CD4-positive, alpha-beta memory T cell (primary cell): ENCODE measurements at regions of chr9 and their contacts with region 1.

Region 1: GRCh38 chr9:77456829-77457437 is 191.2 kb downstream of the GNA14 start:
- DNase-seq: peak; percentile 65 to 74 (median 72)
- H3K4me3 ChIP-seq: no peak overlapping the region
- H3K4me3 Mint-ChIP-seq: no peak overlapping the region
- H3K27ac ChIP-seq: no peak overlapping the region
- H3K27ac Mint-ChIP-seq: no peak overlapping the region
- H3K4me1 ChIP-seq: no peaks in the 10 kb centered on the region
- H3K4me1 Mint-ChIP-seq: peaks cover 8 to 22% (median 14%) of the 10 kb centered on the region in 4 donors
- H3K27me3 ChIP-seq: no peaks in the 10 kb centered on the region
- H3K27me3 Mint-ChIP-seq: peaks cover 0 to 1% of the 10 kb centered on the region in 2 donors

Region 2: GRCh38 chr9:77433675-77434445 is 23.1 kb before region 1 on chr9:
- CTCF ChIA-PET with region 1: interaction called, 37 read pairs
- POLR2A ChIA-PET with region 1: no interaction called
- intact Hi-C with region 1: loop called (anchors 2 kb)
- DNase-seq: peak; percentile 35 to 42 (median 39)
- H3K4me3 ChIP-seq: no peak overlapping the region
- H3K4me3 Mint-ChIP-seq: peak overlapping the region in 3 of 8 donors; percentile 19 to 70 (median 39)
- H3K27ac ChIP-seq: no peak overlapping the region
- H3K27ac Mint-ChIP-seq: peak overlapping the region in 2 of 7 donors; percentile 30 to 77
- H3K4me1 ChIP-seq: no peaks in the 10 kb centered on the region
- H3K4me1 Mint-ChIP-seq: peaks cover 1 to 5% (median 4%) of the 10 kb centered on the region in 4 donors
- H3K27me3 ChIP-seq: no peaks in the 10 kb centered on the region
- H3K27me3 Mint-ChIP-seq: peaks cover 2 to 3% of the 10 kb centered on the region in 2 donors

Region 3: GRCh38 chr9:77469515-77470231 is 12.7 kb after region 1 on chr9:
- CTCF ChIA-PET with region 1: interaction called, 57 read pairs
- POLR2A ChIA-PET with region 1: interaction called, 3 read pairs
- intact Hi-C with region 1: no loop called
- DNase-seq: no peak
- H3K4me3 ChIP-seq: no peak overlapping the region
- H3K4me3 Mint-ChIP-seq: no peak overlapping the region
- H3K27ac ChIP-seq: no peak overlapping the region
- H3K27ac Mint-ChIP-seq: no peak overlapping the region
- H3K4me1 ChIP-seq: no peaks in the 10 kb centered on the region
- H3K4me1 Mint-ChIP-seq: no peaks in the 10 kb centered on the region
- H3K27me3 ChIP-seq: no peaks in the 10 kb centered on the region
- H3K27me3 Mint-ChIP-seq: peaks cover 6 to 10% of the 10 kb centered on the region in 2 donors

Region 4: GRCh38 chr9:77488439-77489126 is 31.6 kb after region 1 on chr9:
- CTCF ChIA-PET with region 1: interaction called, 31 read pairs
- POLR2A ChIA-PET with region 1: no interaction called
- intact Hi-C with region 1: no loop called
- DNase-seq: no peak
- H3K4me3 ChIP-seq: no peak overlapping the region
- H3K4me3 Mint-ChIP-seq: peak overlapping the region in 4 of 8 donors; percentile 42 to 83 (median 73)
- H3K27ac ChIP-seq: no peak overlapping the region
- H3K27ac Mint-ChIP-seq: peak overlapping the region in 1 of 7 donors; percentile 8
- H3K4me1 ChIP-seq: no peaks in the 10 kb centered on the region
- H3K4me1 Mint-ChIP-seq: peaks cover 4 to 12% (median 10%) of the 10 kb centered on the region in 4 donors
- H3K27me3 ChIP-seq: no peaks in the 10 kb centered on the region
- H3K27me3 Mint-ChIP-seq: peaks cover 7 to 17% of the 10 kb centered on the region in 2 donors

Region 5: GRCh38 chr9:77521091-77521490 is 64.2 kb after region 1 on chr9:
- CTCF ChIA-PET with region 1: no interaction called
- POLR2A ChIA-PET with region 1: no interaction called
- intact Hi-C with region 1: no loop called
- DNase-seq: no peak
- H3K4me3 ChIP-seq: no peak overlapping the region
- H3K4me3 Mint-ChIP-seq: no peak overlapping the region
- H3K27ac ChIP-seq: no peak overlapping the region
- H3K27ac Mint-ChIP-seq: no peak overlapping the region
- H3K4me1 ChIP-seq: no peaks in the 10 kb centered on the region
- H3K4me1 Mint-ChIP-seq: no peaks in the 10 kb centered on the region
- H3K27me3 ChIP-seq: no peaks in the 10 kb centered on the region
- H3K27me3 Mint-ChIP-seq: peaks cover 7 to 10% of the 10 kb centered on the region in 2 donors

Region 6: DNA sequence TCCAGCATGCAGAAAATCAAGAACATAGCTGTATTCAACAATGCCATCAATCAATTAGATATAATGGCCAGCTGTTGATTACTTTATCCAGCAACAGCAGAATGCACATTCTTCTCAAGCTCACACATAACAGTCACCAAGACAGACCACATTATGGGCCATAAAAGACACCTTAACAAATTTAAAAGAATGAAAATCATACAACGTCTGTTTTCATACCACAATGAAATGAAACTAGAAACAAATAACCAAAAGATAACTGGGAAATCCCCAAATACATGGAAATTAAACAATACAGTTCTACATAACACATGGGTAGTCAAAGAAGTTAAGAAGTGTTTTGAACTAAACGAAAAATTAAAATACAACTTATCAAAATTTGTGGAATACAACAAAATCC is 322.1 kb after region 1 on chr9:
- CTCF ChIA-PET with region 1: no interaction called
- POLR2A ChIA-PET with region 1: no interaction called
- intact Hi-C with region 1: loop called (anchors 5 kb)
- DNase-seq: peak in 2 of 5 donors; percentile 11 to 34
- H3K4me3 ChIP-seq: peak overlapping the region; percentile 8 to 9
- H3K4me3 Mint-ChIP-seq: peak overlapping the region; percentile 75 to 88 (median 86)
- H3K27ac ChIP-seq: peak overlapping the region; percentile 45
- H3K27ac Mint-ChIP-seq: peak overlapping the region; percentile 47 to 91 (median 85)
- H3K4me1 ChIP-seq: peaks cover 28% of the 10 kb centered on the region
- H3K4me1 Mint-ChIP-seq: peaks cover 29 to 48% (median 38%) of the 10 kb centered on the region in 4 donors
- H3K27me3 ChIP-seq: no peaks in the 10 kb centered on the region
- H3K27me3 Mint-ChIP-seq: no peaks in the 10 kb centered on the region

Region 7: DNA sequence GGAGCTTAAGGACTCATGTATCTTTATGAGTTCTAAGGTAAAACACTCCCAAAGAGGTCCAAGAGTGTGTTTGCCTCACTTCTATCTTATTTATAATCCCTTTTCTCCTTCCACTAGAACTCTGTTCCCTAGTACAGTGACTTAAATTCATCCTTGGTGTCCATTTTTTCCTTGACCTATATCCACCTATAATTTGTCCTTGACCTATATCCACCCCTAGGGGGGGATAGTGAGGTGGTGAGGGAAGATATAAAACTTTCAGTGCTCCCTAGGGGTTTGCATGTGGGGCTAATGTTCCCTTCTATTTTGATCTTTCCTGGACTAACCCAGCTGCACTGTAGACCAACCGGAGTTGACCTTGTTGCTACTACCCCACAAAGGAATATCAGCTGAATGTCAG is 658.1 kb after region 1 on chr9:
- CTCF ChIA-PET with region 1: interaction called, 13 read pairs
- POLR2A ChIA-PET with region 1: interaction called, 3 read pairs
- intact Hi-C with region 1: no loop called
- DNase-seq: peak in 1 of 5 donors; percentile 21
- H3K4me3 ChIP-seq: no peak overlapping the region
- H3K4me3 Mint-ChIP-seq: no peak overlapping the region
- H3K27ac ChIP-seq: no peak overlapping the region
- H3K27ac Mint-ChIP-seq: peak overlapping the region in 1 of 7 donors; percentile 40
- H3K4me1 ChIP-seq: peaks cover 52% of the 10 kb centered on the region
- H3K4me1 Mint-ChIP-seq: peaks cover 44 to 70% (median 54%) of the 10 kb centered on the region in 4 donors
- H3K27me3 ChIP-seq: no peaks in the 10 kb centered on the region
- H3K27me3 Mint-ChIP-seq: no peaks in the 10 kb centered on the region

Region 8: GRCh38 chr9:78213712-78214111 is 756.8 kb after region 1 on chr9:
- CTCF ChIA-PET with region 1: interaction called, 43 read pairs
- POLR2A ChIA-PET with region 1: no interaction called
- intact Hi-C with region 1: loop called (anchors 1 kb)
- DNase-seq: peak in 4 of 5 donors; percentile 29 to 44 (median 38)
- H3K4me3 ChIP-seq: no peak overlapping the region
- H3K4me3 Mint-ChIP-seq: peak overlapping the region in 4 of 8 donors; percentile 21 to 56 (median 44)
- H3K27ac ChIP-seq: no peak overlapping the region
- H3K27ac Mint-ChIP-seq: peak overlapping the region in 3 of 7 donors; percentile 30 to 65 (median 44)
- H3K4me1 ChIP-seq: peaks cover 37% of the 10 kb centered on the region
- H3K4me1 Mint-ChIP-seq: peaks cover 32 to 47% (median 37%) of the 10 kb centered on the region in 4 donors
- H3K27me3 ChIP-seq: no peaks in the 10 kb centered on the region
- H3K27me3 Mint-ChIP-seq: no peaks in the 10 kb centered on the region